Activated CD4-positive, alpha-beta memory T cell treated with anti-CD3 and anti-CD28 coated beads, Interleukin-2, amount 10 ng/mL, durations not matched to agents 7 days and 5 days (primary cell): ENCODE measurements at regions of chr2 and their contacts with region 1.

Region 1: GRCh38 chr2:10122386-10123280 is at the start of gene RRM2:
- DNase-seq: peak; percentile 96
- H3K4me3 Mint-ChIP-seq: peak within 1 kb of the TSS; percentile 97
- H3K27ac Mint-ChIP-seq: peak within 1 kb of the TSS; percentile 98
- H3K4me1 Mint-ChIP-seq: peaks cover 67% of the 10 kb centered on the region
- H3K27me3 Mint-ChIP-seq: no peaks in the 10 kb centered on the region
- total RNA-seq, gene RRM2: 546 to 570 TPM

Region 2: DNA sequence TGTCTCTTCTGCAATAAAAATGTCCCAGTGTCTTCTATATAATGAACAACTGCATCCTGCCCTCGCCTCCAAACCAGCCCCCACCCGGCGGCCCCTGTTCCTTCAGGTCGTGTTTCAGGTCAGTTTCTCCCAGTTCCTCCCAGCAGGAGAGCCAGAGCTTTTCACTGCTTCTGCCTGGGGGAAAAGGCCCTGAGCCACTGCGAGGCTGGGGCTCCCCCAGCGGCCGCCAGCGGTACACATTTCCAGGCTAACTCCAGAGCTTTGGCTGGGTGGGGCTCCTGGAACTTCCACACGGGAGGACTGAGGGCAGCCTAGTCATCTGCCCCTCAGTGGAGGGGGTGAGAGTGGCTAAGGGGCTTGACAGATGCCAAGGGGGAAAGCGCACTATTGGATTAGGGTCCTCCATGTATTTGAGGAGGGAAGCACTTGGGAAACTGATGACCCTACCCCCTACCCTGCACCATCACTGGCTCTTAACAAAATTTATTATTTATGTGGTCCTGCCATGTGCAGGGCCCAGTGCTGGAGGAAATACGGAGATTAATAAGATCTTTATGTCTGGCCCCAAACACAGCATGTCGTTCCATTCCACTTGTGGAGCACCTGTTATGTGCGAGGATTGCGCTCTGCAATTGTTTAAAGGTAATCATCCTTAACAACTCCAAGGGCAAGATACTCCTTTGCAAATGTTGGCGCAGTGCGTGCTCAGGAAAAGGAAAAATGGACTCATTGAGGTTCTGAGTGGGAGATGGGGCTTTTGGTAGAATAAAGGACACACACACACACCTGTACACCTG is 25.1 kb before region 1 on chr2:
- CTCF ChIA-PET with region 1: interaction called, 14 read pairs
- POLR2A ChIA-PET with region 1: interaction called, 6 read pairs
- DNase-seq: peak; percentile 41
- H3K4me3 Mint-ChIP-seq: no peak overlapping the region
- H3K27ac Mint-ChIP-seq: no peak overlapping the region
- H3K4me1 Mint-ChIP-seq: peaks cover 6% of the 10 kb centered on the region
- H3K27me3 Mint-ChIP-seq: peaks cover 28% of the 10 kb centered on the region

Region 3: GRCh38 chr2:10141736-10142642 is 19.4 kb after region 1 on chr2:
- CTCF ChIA-PET with region 1: interaction called, 6 read pairs
- POLR2A ChIA-PET with region 1: interaction called, 126 read pairs
- DNase-seq: peak; percentile 36
- H3K4me3 Mint-ChIP-seq: no peak overlapping the region
- H3K27ac Mint-ChIP-seq: peak overlapping the region; percentile 53
- H3K4me1 Mint-ChIP-seq: peaks cover 27% of the 10 kb centered on the region
- H3K27me3 Mint-ChIP-seq: no peaks in the 10 kb centered on the region

Region 4: DNA sequence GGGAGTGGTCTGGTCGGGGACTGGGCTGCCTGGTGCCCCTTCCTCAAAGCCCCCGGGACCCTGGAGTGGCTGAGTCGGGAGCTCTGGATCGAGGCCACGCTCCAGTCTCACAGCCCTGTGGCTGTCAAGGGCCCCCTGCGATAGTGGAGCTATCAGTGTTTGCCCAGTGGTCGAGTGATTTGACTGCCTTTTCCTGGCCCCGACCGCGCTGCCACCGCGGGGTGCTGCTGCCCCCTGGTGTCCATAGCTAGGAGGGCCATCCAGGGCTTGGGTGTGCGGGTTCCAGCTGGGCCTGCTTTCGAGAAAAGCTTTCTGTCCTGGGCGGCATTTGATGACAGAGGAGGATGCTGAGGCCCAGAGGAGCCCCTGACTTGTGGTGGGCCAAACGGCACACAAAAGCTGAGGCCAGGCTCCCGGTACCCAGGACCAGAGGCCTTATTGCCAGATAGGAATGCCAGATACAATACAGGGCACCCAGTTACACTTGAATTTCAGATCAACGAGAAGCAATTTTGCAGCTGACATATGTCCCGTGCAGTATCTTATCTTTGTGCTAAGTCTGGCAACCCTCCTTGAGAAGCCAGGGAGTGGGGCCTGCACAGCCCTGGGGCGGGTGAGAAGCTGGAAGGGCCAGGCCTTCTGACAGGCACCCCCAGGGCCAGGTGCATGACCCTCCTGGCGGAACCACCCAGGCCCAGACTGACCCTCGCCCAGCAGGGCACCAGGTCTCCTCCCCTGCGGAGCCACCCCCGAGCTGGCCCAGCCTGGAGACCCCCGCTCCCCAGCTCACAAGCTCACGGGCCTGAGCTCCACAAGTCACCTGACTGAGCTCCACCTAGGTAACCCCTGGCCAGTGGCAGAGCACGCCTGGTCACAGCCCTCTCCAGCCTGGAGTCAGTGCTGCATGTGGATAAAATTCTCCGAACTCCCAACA is 312.5 kb after region 1 on chr2:
- CTCF ChIA-PET with region 1: interaction called, 53 read pairs
- POLR2A ChIA-PET with region 1: interaction called, 30 read pairs
- DNase-seq: peak; percentile 75
- H3K4me3 Mint-ChIP-seq: no peak overlapping the region
- H3K27ac Mint-ChIP-seq: no peak overlapping the region
- H3K4me1 Mint-ChIP-seq: peaks cover 15% of the 10 kb centered on the region
- H3K27me3 Mint-ChIP-seq: peaks cover 12% of the 10 kb centered on the region